Left cardiac atrium (tissue), 4 donors: ENCODE measurements at regions of chr1 and their contacts with region 1.

Region 1: DNA sequence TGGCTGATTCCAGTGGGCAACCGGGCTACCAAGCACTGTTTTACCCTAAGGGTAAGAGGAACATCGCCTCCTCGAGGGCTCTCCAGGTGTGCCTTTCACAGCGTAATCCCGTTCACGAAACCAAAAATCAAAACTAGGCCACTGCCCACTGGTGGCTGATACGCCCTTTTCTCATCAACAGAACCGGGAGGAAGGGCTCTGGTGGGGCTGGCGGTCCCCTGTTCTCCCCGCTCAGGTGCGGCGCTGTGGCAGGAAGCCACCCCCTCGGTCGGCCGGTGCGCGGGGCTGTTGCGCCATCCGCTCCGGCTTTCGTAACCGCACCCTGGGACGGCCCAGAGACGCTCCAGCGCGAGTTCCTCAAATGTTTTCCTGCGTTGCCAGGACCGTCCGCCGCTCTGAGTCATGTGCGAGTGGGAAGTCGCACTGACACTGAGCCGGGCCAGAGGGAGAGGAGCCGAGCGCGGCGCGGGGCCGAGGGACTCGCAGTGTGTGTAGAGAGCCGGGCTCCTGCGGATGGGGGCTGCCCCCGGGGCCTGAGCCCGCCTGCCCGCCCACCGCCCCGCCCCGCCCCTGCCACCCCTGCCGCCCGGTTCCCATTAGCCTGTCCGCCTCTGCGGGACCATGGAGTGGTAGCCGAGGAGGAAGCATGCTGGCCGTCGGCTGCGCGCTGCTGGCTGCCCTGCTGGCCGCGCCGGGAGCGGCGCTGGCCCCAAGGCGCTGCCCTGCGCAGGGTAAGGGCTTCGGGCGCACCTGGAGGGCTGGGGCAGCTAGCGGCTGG is at the start of gene IL6R:
- DNase-seq: peak; percentile 96
- ATAC-seq: peak; percentile 87 to 89
- total RNA-seq, gene IL6R: 11.2 to 11.4 TPM

Region 2: DNA sequence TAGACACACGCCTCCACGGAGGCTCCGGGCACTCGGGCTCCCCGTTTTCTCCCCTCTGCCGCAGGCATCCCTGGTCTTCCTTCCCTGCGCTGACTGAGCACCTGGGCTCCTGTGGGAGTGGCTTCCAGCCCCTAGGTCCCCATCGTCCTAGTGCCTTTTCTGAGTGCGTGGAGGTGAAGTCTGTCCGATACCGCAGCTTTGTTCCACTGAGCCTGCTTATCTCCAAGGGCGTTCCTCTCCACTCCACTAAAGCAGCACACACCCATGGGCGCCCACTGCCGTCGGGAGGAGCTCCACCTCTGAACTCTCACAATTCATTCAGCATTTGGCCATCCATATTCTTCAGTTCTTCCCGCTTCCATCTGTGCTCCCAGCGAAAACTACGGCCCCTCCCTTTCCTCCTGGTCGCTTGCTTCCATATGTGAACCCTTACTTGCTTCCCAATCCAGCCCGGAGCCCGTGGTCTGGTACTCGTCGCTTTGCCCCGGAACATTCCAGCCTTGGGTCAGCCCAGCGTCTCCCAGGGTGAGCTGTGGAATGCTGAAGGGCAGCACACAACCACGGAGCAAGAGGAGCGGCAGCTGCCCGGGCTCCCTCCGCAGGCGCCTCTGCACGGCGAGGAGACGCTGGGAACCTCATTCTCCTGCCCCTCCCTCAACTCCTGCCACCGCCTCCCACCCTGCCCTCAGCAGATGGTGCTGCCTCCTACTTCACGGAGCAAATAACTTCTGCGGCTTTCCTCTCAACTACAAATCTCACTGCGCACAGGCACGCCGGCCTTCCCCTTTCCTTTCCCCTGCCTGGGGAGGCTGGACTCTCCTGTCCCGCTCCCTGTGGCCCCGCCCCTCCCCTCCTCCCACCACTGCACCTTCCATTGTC is 52.4 kb before region 1 on chr1:
- intact Hi-C with region 1: loop called in 1 of 2 experiments (anchors 10 kb)
- DNase-seq: peak; percentile 62
- ATAC-seq: peak; percentile 64 to 68

Region 3: GRCh38 chr1:154453574-154454352 is 48.6 kb after region 1 on chr1:
- intact Hi-C with region 1: loop called in 1 of 2 experiments (anchors 10 kb)
- DNase-seq: no peak
- ATAC-seq: peak; percentile 62 to 72